GM12878 (cell line): ENCODE measurements at regions of chr19 and their contacts with region 1.

Region 1: GRCh38 chr19:47863514-47863936 is 4.5 kb downstream of the TPRX2 start:
- DNase-seq: no peak
- ATAC-seq: peak; percentile 98
- H3K4me3 ChIP-seq: no peak overlapping the region
- H3K27ac ChIP-seq: no peak overlapping the region
- H3K4me1 ChIP-seq: no peaks in the 10 kb centered on the region
- H3K27me3 ChIP-seq: no peaks in the 10 kb centered on the region
- CTCF ChIP-seq: peak; percentile 90 to 93 (median 91)
- EP300 ChIP-seq: no peak
- POLR2A ChIP-seq: no peak
- RAD21 ChIP-seq: peak; percentile 70

Region 2: GRCh38 chr19:47813304-47814004 is 50.1 kb before region 1 on chr19:
- CTCF ChIA-PET with region 1: interaction called, 7 read pairs
- POLR2A ChIA-PET with region 1: no interaction called
- RAD21 ChIA-PET with region 1: no interaction called
- SMC1A ChIA-PET with region 1: no interaction called
- in situ Hi-C with region 1: no loop called
- intact Hi-C with region 1: loop called (anchors 5 kb)
- DNase-seq: no peak
- ATAC-seq: peak; percentile 94
- H3K4me3 ChIP-seq: no peak overlapping the region
- H3K27ac ChIP-seq: no peak overlapping the region
- H3K4me1 ChIP-seq: no peaks in the 10 kb centered on the region
- H3K27me3 ChIP-seq: no peaks in the 10 kb centered on the region
- CTCF ChIP-seq: peak; percentile 39 to 81 (median 63); a peak in 5 of 6 replicates
- EP300 ChIP-seq: no peak
- POLR2A ChIP-seq: no peak
- RAD21 ChIP-seq: peak; percentile 38; the same call in 1 of the 2 replicates

Region 3: GRCh38 chr19:48568345-48568886 is 704.9 kb after region 1 on chr19:
- CTCF ChIA-PET with region 1: no interaction called
- POLR2A ChIA-PET with region 1: no interaction called
- RAD21 ChIA-PET with region 1: no interaction called
- SMC1A ChIA-PET with region 1: no interaction called
- in situ Hi-C with region 1: loop called (anchors 25 kb)
- intact Hi-C with region 1: no loop called
- DNase-seq: no peak
- ATAC-seq: no peak
- H3K4me3 ChIP-seq: no peak overlapping the region
- H3K27ac ChIP-seq: no peak overlapping the region
- H3K4me1 ChIP-seq: no peaks in the 10 kb centered on the region
- H3K27me3 ChIP-seq: peaks cover 0 to 3% of the 10 kb centered on the region in 2 experiments; a peak in 2 of 4 replicates
- CTCF ChIP-seq: no peak
- EP300 ChIP-seq: no peak
- POLR2A ChIP-seq: no peak
- RAD21 ChIP-seq: no peak